ENCODE measurements at regions of chr1 and their contacts with region 1.

Region 1: DNA sequence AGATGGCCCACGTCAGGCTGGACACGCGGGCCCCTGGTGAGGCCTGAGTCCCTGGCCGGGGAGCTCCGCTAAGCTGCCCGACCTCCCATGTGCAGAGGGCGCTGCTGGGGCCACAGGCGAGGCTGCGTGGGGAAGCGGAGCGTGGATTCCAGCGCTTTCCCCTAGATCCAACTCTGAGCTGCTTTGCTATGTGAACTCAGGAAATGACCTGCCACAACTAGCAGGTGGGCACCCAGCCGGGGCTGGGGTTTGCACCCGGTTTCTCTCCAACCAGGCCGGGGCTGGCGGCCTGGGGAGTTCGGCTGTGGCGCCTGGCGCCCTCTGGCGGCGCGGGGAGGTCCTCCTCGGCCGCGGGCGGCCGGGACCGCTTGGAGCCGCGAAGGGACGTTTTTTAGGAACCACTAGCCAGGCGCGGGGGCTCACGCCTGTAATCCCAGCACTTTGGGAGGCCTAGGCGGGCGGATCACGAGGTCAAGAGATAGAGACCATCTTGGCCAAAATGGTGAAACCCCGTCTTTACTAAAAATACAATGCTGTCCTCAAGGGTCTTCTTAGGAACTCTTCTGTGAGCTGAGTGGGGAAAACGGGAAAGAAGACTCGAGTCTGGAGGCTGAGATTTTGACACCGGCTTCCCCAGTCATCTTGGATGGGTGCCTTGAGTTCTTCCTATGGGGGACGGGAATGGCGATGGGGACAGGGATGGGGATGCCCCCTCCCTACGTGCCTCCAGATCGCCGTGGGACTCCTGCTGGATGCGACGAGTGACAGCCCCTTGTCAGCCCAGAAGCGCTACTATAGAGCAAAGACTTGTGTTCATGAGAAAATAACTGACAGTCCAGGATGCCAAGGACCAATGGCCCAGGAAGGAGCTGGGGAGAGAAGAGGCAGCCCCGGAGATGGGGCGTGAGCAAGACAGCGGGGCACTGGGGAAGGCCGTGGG is 12.6 kb downstream of the PYCR2 start:
- DNase-seq: peak; percentile 65 to 80 (median 70)
- H3K4me3 ChIP-seq: no peak overlapping the region
- H3K4me3 Mint-ChIP-seq: no peak overlapping the region
- H3K27ac ChIP-seq: no peak overlapping the region
- H3K27ac Mint-ChIP-seq: peak overlapping the region in 1 of 8 donors; percentile 76
- H3K4me1 ChIP-seq: peaks cover 22% of the 10 kb centered on the region
- H3K4me1 Mint-ChIP-seq: peaks cover 24 to 31% (median 28%) of the 10 kb centered on the region in 3 donors
- H3K27me3 ChIP-seq: no peaks in the 10 kb centered on the region
- H3K27me3 Mint-ChIP-seq: no peaks in the 10 kb centered on the region

Region 2: DNA sequence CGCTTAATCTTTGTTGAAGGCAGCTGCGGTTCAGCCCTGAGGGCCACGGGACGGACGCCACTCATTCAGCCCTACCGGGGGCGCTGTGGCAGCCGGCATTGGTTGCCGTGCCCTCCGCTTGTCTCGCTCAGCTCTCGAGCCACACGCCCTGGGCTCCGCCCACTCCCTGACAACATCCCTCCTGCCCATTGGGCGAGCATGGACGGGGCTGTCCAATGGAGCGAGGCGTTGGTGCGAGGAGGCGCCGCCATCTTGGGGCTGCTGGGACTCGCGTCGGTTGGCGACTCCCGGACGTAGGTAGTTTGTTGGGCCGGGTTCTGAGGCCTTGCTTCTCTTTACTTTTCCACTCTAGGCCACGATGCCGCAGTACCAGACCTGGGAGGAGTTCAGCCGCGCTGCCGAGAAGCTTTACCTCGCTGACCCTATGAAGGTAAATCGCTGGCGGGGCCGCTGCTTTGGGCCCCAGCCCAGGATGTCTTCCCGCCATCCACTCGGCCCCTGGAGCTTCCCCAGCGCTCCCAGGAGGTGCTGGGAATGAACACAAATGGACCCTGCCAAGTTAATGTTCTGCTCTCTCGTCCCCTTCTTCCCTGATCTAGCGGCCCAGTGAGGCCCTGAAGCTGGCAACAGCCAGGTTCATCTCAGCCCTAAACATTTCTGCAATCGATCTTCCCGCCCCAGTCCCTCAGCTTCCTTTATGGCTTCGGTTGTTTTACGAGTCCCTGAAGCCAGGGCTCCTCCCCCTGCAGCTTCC is 133.7 kb before region 1 on chr1 and contains the start of gene SRP9:
- CTCF ChIA-PET with region 1: interaction called, 23 read pairs
- POLR2A ChIA-PET with region 1: interaction called, 5 read pairs
- DNase-seq: peak; percentile 98 to 99 (median 99)
- H3K4me3 ChIP-seq: peak within 1 kb of the TSS; percentile 95
- H3K4me3 Mint-ChIP-seq: no peak within 1 kb of the TSS
- H3K27ac ChIP-seq: peak within 1 kb of the TSS; percentile 99
- H3K27ac Mint-ChIP-seq: no peak within 1 kb of the TSS
- H3K4me1 ChIP-seq: peaks cover 50% of the 10 kb centered on the region
- H3K4me1 Mint-ChIP-seq: peaks cover 34 to 49% (median 35%) of the 10 kb centered on the region in 3 donors
- H3K27me3 ChIP-seq: no peaks in the 10 kb centered on the region
- H3K27me3 Mint-ChIP-seq: no peaks in the 10 kb centered on the region
- total RNA-seq, gene SRP9: 339 TPM

Region 3: GRCh38 chr1:225857256-225857655 is 54.2 kb before region 1 on chr1:
- CTCF ChIA-PET with region 1: interaction called, 15 read pairs
- POLR2A ChIA-PET with region 1: no interaction called
- DNase-seq: no peak
- H3K4me3 ChIP-seq: no peak overlapping the region
- H3K4me3 Mint-ChIP-seq: no peak overlapping the region
- H3K27ac ChIP-seq: no peak overlapping the region
- H3K27ac Mint-ChIP-seq: peak overlapping the region in 3 of 8 donors; percentile 33 to 93 (median 89)
- H3K4me1 ChIP-seq: peaks cover 9% of the 10 kb centered on the region
- H3K4me1 Mint-ChIP-seq: peaks cover 35 to 45% (median 41%) of the 10 kb centered on the region in 3 donors
- H3K27me3 ChIP-seq: no peaks in the 10 kb centered on the region
- H3K27me3 Mint-ChIP-seq: no peaks in the 10 kb centered on the region

Region 4: DNA sequence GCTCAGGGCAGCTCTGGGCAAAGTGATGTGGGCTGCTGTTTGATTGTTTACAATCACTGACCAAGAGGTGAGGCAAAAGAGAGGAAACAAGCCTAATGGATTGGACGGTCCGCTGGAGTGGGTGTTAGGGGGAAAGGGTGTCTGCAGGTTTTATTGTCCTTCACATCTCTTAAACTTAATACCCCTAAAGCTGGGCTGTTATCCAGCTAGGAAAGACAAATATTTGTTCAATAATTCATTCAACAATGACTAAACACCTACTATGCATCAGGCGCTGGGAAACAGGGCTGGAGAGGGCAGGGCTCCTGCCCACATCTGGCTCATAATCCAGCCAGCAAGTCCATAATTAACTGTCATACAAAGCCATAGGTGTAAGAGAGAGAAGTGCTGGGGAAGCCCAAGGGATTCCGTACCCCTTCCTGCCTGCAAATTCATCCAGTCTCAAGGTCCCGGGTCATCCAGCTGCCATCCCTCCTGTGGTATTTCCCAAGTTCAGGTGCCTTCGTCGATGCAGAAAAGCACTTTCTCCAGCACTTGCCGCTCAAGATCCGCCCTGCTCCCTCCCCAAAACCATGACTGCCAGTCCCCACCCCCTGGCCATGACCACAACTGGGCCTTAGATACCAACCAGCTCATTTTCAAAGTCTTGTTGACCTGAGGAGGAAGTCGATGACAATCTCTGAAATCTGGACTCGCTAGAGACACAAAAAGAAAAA is 39.9 kb before region 1 on chr1:
- CTCF ChIA-PET with region 1: interaction called, 12 read pairs
- POLR2A ChIA-PET with region 1: no interaction called
- DNase-seq: peak in 1 of 5 donors; percentile 41
- H3K4me3 ChIP-seq: no peak overlapping the region
- H3K4me3 Mint-ChIP-seq: peak overlapping the region in 2 of 7 donors; percentile 26 to 41
- H3K27ac ChIP-seq: no peak overlapping the region
- H3K27ac Mint-ChIP-seq: peak overlapping the region in 7 of 8 donors; percentile 11 to 83 (median 72)
- H3K4me1 ChIP-seq: peaks cover 37% of the 10 kb centered on the region
- H3K4me1 Mint-ChIP-seq: peaks cover 62 to 76% (median 75%) of the 10 kb centered on the region in 3 donors
- H3K27me3 ChIP-seq: no peaks in the 10 kb centered on the region
- H3K27me3 Mint-ChIP-seq: no peaks in the 10 kb centered on the region

Region 5: DNA sequence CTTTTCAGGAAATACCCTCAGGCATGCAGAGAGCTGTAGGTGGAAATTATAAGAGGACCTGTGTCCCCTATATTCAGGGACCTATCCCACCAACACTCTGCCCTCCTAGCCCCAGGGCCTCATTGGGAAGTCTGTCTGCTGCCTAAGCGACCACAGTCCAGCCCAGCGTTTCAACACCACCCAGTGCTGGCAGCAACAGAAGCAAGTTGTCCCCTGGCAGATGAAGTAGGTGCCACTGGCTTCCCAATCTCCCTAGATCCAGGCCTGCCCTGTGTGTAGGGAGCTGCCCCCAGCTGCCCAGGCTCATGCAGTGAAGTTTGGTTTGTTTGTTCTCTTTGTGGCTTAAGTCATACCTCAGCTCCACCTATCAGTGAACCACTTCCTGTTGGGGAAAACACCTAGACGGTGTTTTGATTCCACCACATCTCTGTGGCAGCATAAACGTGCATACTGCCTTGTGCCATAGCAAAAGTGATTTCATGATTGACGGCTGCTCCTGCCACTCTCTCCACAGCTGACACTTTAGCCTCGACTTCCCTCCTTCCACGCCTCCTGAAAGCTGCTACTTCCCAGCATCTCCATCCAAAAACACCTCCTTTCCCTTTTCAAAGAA is 14.4 kb before region 1 on chr1:
- CTCF ChIA-PET with region 1: interaction called, 42 read pairs
- POLR2A ChIA-PET with region 1: interaction called, 8 read pairs
- DNase-seq: peak; percentile 46 to 89 (median 85)
- H3K4me3 ChIP-seq: peak overlapping the region; percentile 48
- H3K4me3 Mint-ChIP-seq: peak overlapping the region; percentile 28 to 84 (median 82)
- H3K27ac ChIP-seq: peak overlapping the region; percentile 45
- H3K27ac Mint-ChIP-seq: peak overlapping the region; percentile 90 to 98 (median 95)
- H3K4me1 ChIP-seq: peaks cover 44% of the 10 kb centered on the region
- H3K4me1 Mint-ChIP-seq: peaks cover 45 to 62% (median 53%) of the 10 kb centered on the region in 3 donors
- H3K27me3 ChIP-seq: no peaks in the 10 kb centered on the region
- H3K27me3 Mint-ChIP-seq: no peaks in the 10 kb centered on the region

Region 6: DNA sequence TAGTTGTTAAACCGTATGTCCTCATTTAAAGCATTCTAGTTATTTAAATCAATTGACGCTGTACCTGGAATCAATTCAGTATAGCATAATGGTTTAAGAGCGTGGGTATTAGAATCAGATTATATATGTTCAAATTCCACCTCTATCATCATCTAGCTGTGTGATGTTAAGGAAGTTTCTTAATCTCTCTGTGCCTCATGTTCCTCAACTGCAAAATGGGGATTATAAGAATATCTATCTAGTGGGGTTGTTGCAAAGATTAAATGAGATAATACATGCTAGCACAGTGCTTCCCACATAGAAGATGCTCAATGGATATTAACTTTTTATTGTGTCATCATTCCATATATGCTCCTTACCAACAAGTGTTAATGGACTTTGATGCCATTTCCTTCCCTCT is 328.0 kb after region 1 on chr1:
- CTCF ChIA-PET with region 1: no interaction called
- POLR2A ChIA-PET with region 1: no interaction called
- DNase-seq: no peak
- H3K4me3 ChIP-seq: no peak overlapping the region
- H3K4me3 Mint-ChIP-seq: no peak overlapping the region
- H3K27ac ChIP-seq: no peak overlapping the region
- H3K27ac Mint-ChIP-seq: no peak overlapping the region
- H3K4me1 ChIP-seq: no peaks in the 10 kb centered on the region
- H3K4me1 Mint-ChIP-seq: no peaks in the 10 kb centered on the region
- H3K27me3 ChIP-seq: no peaks in the 10 kb centered on the region
- H3K27me3 Mint-ChIP-seq: no peaks in the 10 kb centered on the region

Region 7: DNA sequence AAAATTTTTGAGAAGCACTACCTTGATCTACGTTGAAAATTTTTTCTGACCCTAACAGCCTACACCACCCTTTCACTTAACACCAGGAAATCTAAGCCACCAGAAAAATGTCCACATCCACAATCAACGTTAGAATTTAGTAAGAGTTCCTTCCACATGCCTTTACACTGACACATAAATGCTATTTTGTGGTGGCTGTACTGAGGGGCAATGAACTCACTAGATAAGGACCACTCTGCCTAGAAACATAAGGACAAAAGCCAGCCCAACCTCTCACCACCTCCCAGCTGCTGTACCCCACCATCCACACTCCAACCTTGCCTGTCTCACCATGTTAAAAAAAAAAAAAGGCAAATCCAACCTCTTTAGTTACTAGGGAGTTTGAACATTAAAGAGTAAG is 466.6 kb after region 1 on chr1:
- CTCF ChIA-PET with region 1: no interaction called
- POLR2A ChIA-PET with region 1: no interaction called
- DNase-seq: no peak
- H3K4me3 ChIP-seq: no peak overlapping the region
- H3K4me3 Mint-ChIP-seq: no peak overlapping the region
- H3K27ac ChIP-seq: no peak overlapping the region
- H3K27ac Mint-ChIP-seq: peak overlapping the region in 3 of 8 donors; percentile 11 to 45 (median 17)
- H3K4me1 ChIP-seq: no peaks in the 10 kb centered on the region
- H3K4me1 Mint-ChIP-seq: no peaks in the 10 kb centered on the region
- H3K27me3 ChIP-seq: no peaks in the 10 kb centered on the region
- H3K27me3 Mint-ChIP-seq: no peaks in the 10 kb centered on the region

Region 8: GRCh38 chr1:227372726-227373130 is 1461.3 kb after region 1 on chr1:
- CTCF ChIA-PET with region 1: no interaction called
- POLR2A ChIA-PET with region 1: no interaction called
- DNase-seq: no peak
- H3K4me3 ChIP-seq: no peak overlapping the region
- H3K4me3 Mint-ChIP-seq: no peak overlapping the region
- H3K27ac ChIP-seq: no peak overlapping the region
- H3K27ac Mint-ChIP-seq: no peak overlapping the region
- H3K4me1 ChIP-seq: no peaks in the 10 kb centered on the region
- H3K4me1 Mint-ChIP-seq: no peaks in the 10 kb centered on the region
- H3K27me3 ChIP-seq: no peaks in the 10 kb centered on the region
- H3K27me3 Mint-ChIP-seq: peaks cover 8 to 35% of the 10 kb centered on the region in 2 donors

Measured in CD8-positive, alpha-beta memory T cell (primary cell).